Activated CD4-positive, alpha-beta memory T cell treated with anti-CD3 and anti-CD28 coated beads for 36 hours (primary cell): ENCODE measurements at regions of chr3 and their contacts with region 1.

Region 1: GRCh38 chr3:26316472-26316871 is 306.1 kb upstream of the LRRC3B start:
- DNase-seq: no peak
- H3K4me3 Mint-ChIP-seq: no peak overlapping the region
- H3K27ac Mint-ChIP-seq: no peak overlapping the region
- H3K4me1 Mint-ChIP-seq: no peaks in the 10 kb centered on the region
- H3K27me3 Mint-ChIP-seq: no peaks in the 10 kb centered on the region

Region 2: GRCh38 chr3:26132942-26133341 is 183.5 kb before region 1 on chr3:
- CTCF ChIA-PET with region 1: no interaction called
- POLR2A ChIA-PET with region 1: no interaction called
- intact Hi-C with region 1: no loop called
- DNase-seq: no peak
- H3K4me3 Mint-ChIP-seq: no peak overlapping the region
- H3K27ac Mint-ChIP-seq: no peak overlapping the region
- H3K4me1 Mint-ChIP-seq: no peaks in the 10 kb centered on the region
- H3K27me3 Mint-ChIP-seq: peaks cover 2% of the 10 kb centered on the region

Region 3: GRCh38 chr3:26345613-26346012 is 29.1 kb after region 1 on chr3:
- CTCF ChIA-PET with region 1: no interaction called
- POLR2A ChIA-PET with region 1: no interaction called
- intact Hi-C with region 1: loop called (anchors 1 kb)
- DNase-seq: no peak
- H3K4me3 Mint-ChIP-seq: no peak overlapping the region
- H3K27ac Mint-ChIP-seq: no peak overlapping the region
- H3K4me1 Mint-ChIP-seq: no peaks in the 10 kb centered on the region
- H3K27me3 Mint-ChIP-seq: no peaks in the 10 kb centered on the region

Region 4: DNA sequence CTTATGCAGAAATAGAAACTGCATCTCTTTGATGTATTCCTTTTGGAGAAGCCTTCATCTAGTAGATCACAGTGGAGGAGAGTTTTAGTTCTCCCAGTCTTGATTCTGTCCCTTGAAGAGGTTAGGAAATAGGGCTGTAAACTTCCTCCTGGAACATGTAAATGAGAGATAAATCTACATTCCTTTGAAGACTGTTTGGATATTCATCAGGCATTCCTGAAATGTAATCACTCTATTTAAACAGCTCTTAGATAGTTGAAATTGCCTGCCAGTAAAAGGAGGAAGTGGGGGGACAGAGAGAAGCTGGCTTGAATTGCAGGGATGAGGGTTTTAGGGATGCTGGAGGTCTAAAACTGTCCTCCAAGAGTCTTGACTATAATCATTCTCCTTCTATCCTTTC is 51.8 kb after region 1 on chr3:
- CTCF ChIA-PET with region 1: no interaction called
- POLR2A ChIA-PET with region 1: no interaction called
- intact Hi-C with region 1: loop called (anchors 2 kb)
- DNase-seq: no peak
- H3K4me3 Mint-ChIP-seq: no peak overlapping the region
- H3K27ac Mint-ChIP-seq: no peak overlapping the region
- H3K4me1 Mint-ChIP-seq: no peaks in the 10 kb centered on the region
- H3K27me3 Mint-ChIP-seq: no peaks in the 10 kb centered on the region